WTC11 (cell line): ENCODE measurements at regions of chr4 and their contacts with region 1.

Region 1: GRCh38 chr4:164779811-164780216 is 25.9 kb downstream of the SMIM31 start:
- DNase-seq: peak; percentile 53
- ATAC-seq: peak; percentile 74
- H3K4me3 Mint-ChIP-seq: no peak overlapping the region
- H3K27ac Mint-ChIP-seq: no peak overlapping the region
- H3K4me1 Mint-ChIP-seq: peaks cover 7% of the 10 kb centered on the region
- H3K27me3 Mint-ChIP-seq: no peaks in the 10 kb centered on the region
- CTCF ChIP-seq: peak; percentile 90

Region 2: GRCh38 chr4:164807611-164808010 is 27.8 kb after region 1 on chr4:
- CTCF ChIA-PET with region 1: no interaction called
- POLR2A ChIA-PET with region 1: no interaction called
- DNase-seq: peak; percentile 35
- ATAC-seq: peak; percentile 82
- H3K4me3 Mint-ChIP-seq: no peak overlapping the region
- H3K27ac Mint-ChIP-seq: peak overlapping the region; percentile 7; the same call in 1 of the 2 replicates
- H3K4me1 Mint-ChIP-seq: peaks cover 33% of the 10 kb centered on the region
- H3K27me3 Mint-ChIP-seq: no peaks in the 10 kb centered on the region
- CTCF ChIP-seq: no peak

Region 3: DNA sequence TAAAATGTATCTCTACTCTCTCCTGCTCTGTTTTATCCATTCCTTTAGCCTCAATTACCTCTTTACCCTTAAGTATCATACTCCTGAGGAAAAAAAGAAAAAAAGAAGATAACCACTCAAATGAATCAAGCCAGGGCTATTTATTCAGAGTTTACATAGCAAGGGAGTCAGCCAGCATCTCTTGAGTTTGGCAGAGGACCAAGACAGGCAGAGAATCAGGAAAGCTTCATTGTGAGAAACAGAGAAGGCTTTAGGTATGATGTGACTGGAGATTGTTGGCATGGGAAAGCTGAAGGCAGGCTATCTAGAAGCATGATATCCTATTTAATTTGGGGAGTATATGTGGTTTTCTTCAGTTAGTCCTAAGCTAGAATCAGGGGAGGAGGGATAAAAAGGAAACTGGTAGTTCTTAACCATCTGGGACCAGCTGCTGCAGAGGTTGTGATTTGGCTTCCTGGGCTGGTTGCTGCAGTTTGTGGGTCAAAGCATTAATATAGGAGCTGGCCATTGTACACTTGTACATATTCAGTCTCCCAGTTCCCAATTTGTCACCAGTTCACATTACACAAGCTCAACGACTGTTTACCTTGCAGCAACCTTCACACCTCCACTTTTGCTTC is 108.4 kb after region 1 on chr4:
- CTCF ChIA-PET with region 1: interaction called, 22 read pairs
- POLR2A ChIA-PET with region 1: no interaction called
- DNase-seq: no peak
- ATAC-seq: no peak
- H3K4me3 Mint-ChIP-seq: no peak overlapping the region
- H3K27ac Mint-ChIP-seq: peak overlapping the region; percentile 20
- H3K4me1 Mint-ChIP-seq: peaks cover 11% of the 10 kb centered on the region
- H3K27me3 Mint-ChIP-seq: no peaks in the 10 kb centered on the region
- CTCF ChIP-seq: no peak